Activated CD4-positive, alpha-beta T cell treated with anti-CD3 and anti-CD28 coated beads for 36 hours (primary cell): ENCODE measurements at regions of chr10 and their contacts with region 1.

Region 1: DNA sequence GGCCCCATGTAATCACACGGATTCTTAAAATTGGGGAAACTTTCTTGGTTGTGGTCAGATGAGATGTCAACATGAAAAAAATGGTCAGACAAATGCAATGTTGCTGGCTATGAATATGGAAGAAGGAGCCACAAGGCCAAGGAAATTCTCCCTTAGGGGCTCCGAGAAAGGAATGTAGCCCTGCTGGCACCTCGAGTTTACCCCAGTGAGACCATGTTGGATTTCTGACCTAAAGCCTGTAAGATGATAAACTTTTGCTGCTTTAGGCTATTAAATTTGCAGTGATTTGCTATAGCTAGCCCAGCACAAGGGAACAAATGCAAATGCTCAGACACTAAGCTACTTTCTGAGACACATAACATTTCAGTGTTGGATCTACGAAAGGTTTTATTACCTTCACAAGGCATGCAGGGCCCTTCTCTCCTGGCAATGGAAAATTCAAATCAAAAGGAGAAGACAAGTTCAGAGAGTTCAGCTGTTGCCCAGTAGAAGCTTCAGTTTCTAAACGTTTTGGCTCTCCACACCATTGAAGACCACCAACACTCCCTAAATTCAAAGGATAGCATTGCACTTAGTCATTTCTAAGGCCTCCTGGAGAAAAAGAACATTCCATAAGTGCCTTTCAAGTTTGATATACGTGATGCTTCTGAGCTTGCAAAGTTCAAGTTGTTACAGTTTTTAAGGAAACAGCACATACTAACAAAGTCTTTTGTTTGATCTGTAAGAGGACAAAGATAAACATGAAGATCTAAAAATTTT is 23.4 kb downstream of the MCMBP start:
- DNase-seq: no peak
- ATAC-seq: no peak
- H3K4me3 Mint-ChIP-seq: no peak overlapping the region
- H3K27ac Mint-ChIP-seq: no peak overlapping the region
- H3K4me1 Mint-ChIP-seq: no peaks in the 10 kb centered on the region
- H3K27me3 Mint-ChIP-seq: no peaks in the 10 kb centered on the region

Region 2: DNA sequence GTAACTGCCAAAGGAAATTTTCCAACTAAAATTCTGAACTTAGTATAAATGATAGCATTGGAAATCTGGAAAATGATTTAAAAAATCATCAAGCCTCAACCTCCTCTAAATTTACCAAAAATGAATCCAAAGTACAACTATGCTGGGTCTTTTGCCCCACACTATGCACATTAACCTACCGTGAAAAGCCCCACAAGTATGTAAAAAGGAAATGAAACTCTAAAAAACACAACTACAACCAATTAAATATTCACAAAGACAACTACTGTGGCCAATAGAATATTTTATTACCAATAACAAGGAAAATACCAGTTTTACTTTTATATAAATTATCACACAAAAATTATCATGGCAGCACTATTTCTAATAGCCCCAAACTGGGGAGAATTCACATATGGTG is 787.9 kb before region 1 on chr10:
- CTCF ChIA-PET with region 1: no interaction called
- POLR2A ChIA-PET with region 1: no interaction called
- intact Hi-C with region 1: loop called in 1 of 2 experiments (anchors 10 kb)
- DNase-seq: no peak
- ATAC-seq: no peak
- H3K4me3 Mint-ChIP-seq: no peak overlapping the region
- H3K27ac Mint-ChIP-seq: peak overlapping the region; percentile 51
- H3K4me1 Mint-ChIP-seq: peaks cover 3% of the 10 kb centered on the region
- H3K27me3 Mint-ChIP-seq: no peaks in the 10 kb centered on the region

Region 3: DNA sequence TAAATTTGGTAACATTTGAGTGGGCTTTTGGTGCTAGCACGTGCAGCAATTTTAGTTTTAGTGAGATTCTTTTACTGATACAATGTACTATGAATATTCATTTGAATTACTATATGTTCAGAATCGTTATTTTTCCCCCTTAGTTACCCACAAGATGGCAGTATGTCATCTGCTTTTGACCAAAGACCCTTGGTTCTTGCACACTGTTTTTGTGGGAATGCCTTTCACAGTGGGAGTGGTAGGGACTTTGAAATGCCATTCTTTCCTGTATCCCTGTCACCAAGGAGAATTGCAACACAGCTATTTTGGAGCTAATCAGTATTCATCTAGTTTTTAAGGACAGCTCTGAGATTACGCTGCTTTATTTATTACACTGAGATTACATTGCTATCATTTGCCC is 84.0 kb after region 1 on chr10:
- CTCF ChIA-PET with region 1: no interaction called
- POLR2A ChIA-PET with region 1: no interaction called
- intact Hi-C with region 1: no loop called
- DNase-seq: no peak
- ATAC-seq: no peak
- H3K4me3 Mint-ChIP-seq: no peak overlapping the region
- H3K27ac Mint-ChIP-seq: no peak overlapping the region
- H3K4me1 Mint-ChIP-seq: peaks cover 13% of the 10 kb centered on the region
- H3K27me3 Mint-ChIP-seq: no peaks in the 10 kb centered on the region